OCI-LY7 (cell line): ENCODE measurements at regions of chr12 and their contacts with region 1.

Region 1: GRCh38 chr12:50006789-50007436 is 18.4 kb downstream of the RACGAP1 start:
- DNase-seq: peak; percentile 77
- H3K4me3 ChIP-seq: peak overlapping the region; percentile 49
- H3K27ac ChIP-seq: peak overlapping the region; percentile 83
- H3K4me1 ChIP-seq: peaks cover 40% of the 10 kb centered on the region
- CTCF ChIP-seq: no peak

Region 2: GRCh38 chr12:50017641-50018040 is 10.7 kb after region 1 on chr12:
- CTCF ChIA-PET with region 1: interaction called, 3 read pairs
- POLR2A ChIA-PET with region 1: interaction called, 10 read pairs
- intact Hi-C with region 1: no loop called
- DNase-seq: no peak
- H3K4me3 ChIP-seq: no peak overlapping the region
- H3K27ac ChIP-seq: no peak overlapping the region
- H3K4me1 ChIP-seq: peaks cover 28% of the 10 kb centered on the region
- CTCF ChIP-seq: no peak

Region 3: GRCh38 chr12:50025187-50026059 is 18.5 kb after region 1 on chr12 and contains the start of gene RACGAP1:
- CTCF ChIA-PET with region 1: interaction called, 9 read pairs
- POLR2A ChIA-PET with region 1: interaction called, 29 read pairs
- intact Hi-C with region 1: loop called (anchors 2 kb)
- DNase-seq: peak; percentile 100
- H3K4me3 ChIP-seq: peak within 1 kb of the TSS; percentile 95
- H3K27ac ChIP-seq: peak within 1 kb of the TSS; percentile 76
- H3K4me1 ChIP-seq: peaks cover 42% of the 10 kb centered on the region
- CTCF ChIP-seq: no peak
- total RNA-seq, gene RACGAP1: 69.6 and 75.3 TPM in 2 replicates